ENCODE measurements at regions of chr7 and their contacts with region 1.

Region 1: DNA sequence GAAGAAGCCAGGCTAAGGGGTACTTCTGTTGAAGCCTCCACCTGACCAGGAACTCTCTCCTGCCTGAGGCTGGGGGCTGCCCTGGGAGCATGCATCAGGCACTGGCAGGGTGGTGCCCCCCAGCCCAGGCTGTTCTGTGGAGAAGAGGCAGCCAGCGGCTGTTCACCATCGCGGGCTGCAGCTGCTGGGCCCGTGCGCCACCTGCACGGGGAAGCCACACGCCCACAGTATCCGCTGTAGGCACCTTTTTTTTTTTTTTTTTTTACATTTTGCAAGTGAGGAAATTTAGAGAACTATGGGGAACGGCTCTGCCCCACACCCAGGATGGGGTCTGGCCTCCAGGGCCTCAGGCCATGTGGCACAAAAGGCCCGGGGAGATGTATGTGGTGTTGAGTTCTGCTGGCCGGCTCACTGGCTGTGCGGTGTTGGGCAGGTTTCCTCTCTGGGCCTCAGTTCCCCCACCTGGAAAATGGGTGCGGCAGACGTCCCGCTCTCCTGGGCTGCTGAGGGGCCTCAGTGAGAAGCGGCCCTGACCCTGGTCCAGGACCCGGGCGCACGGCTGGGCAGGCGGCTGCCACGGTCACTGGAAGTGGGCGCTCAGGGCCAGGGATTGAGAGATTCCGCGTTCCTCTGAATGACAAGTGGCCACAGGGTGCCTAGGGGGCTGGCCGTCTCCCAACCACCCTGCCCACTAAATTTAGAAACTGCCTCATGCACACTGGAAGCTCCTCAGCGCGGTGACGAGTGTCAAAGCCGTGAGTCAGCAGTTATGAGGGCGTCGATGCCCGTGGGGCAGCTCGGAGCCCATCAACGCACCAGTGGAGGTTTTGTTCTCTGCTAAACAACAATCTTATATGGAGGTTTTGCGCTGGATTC is 8.8 kb upstream of the INTS1 start:
- DNase-seq: peak; percentile 94

Region 2: GRCh38 chr7:1532483-1533424 is 19.7 kb after region 1 on chr7:
- intact Hi-C with region 1: loop called (anchors 1 kb)
- DNase-seq: peak; percentile 92

Region 3: DNA sequence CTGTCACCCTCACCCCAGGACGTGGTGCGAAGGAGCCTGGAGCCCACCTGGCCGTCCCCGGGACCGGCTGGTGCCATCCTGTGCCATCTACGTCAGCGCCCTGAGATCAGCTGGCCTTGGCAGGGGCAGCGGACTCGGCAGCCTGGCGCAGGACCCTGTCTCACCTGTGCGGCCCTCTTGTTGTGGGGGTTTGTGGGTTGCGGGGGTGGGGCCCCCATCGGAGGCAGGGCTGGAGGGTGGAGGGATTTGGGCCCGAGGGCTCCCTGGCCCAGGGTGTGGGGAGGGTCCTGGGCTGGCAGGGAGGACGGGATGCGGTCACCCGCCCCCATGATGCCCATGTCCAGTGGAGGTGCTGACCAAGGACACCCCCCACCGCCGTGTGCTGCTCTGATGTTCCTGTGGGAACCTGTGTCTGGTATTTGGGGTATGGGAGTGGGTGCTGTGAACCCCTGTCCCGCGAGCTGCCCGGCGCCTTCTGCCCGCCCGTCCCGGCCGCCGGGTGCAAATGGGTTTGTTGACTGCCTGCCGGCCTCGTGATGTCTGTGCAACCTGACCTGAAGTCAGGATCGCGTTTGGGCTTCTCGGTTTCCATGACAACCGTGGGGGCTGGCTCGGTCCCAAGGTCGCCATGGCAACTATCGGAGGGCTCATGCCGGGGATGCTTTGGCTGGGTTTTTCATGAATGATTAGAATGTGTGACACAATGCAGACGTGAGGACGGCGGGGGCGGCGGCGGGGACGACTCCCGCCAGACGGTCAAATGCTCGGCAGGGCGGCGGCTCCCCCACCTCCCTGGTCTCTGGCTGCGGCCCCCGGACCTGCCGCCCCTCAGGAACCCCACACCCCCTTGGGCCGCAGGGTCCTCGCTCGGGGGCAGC is 24.8 kb after region 1 on chr7:
- intact Hi-C with region 1: loop called (anchors 1 kb)
- DNase-seq: peak; percentile 94

Measured in cardiac septum (tissue), 1 donor.